ENCODE measurements at regions of chr2 and their contacts with region 1.

Region 1: GRCh38 chr2:7725171-7725849 is 808.1 kb downstream of the RNF144A start:
- DNase-seq: peak in 2 of 5 donors; percentile 20 to 22
- H3K4me3 ChIP-seq: no peak overlapping the region
- H3K27ac ChIP-seq: no peak overlapping the region
- H3K4me1 ChIP-seq: peaks cover 2% of the 10 kb centered on the region
- H3K27me3 ChIP-seq: no peaks in the 10 kb centered on the region
- CTCF ChIP-seq: peak in 2 of 3 donors; percentile 13 to 25
- EP300 ChIP-seq: no peak
- POLR2A ChIP-seq: no peak

Region 2: DNA sequence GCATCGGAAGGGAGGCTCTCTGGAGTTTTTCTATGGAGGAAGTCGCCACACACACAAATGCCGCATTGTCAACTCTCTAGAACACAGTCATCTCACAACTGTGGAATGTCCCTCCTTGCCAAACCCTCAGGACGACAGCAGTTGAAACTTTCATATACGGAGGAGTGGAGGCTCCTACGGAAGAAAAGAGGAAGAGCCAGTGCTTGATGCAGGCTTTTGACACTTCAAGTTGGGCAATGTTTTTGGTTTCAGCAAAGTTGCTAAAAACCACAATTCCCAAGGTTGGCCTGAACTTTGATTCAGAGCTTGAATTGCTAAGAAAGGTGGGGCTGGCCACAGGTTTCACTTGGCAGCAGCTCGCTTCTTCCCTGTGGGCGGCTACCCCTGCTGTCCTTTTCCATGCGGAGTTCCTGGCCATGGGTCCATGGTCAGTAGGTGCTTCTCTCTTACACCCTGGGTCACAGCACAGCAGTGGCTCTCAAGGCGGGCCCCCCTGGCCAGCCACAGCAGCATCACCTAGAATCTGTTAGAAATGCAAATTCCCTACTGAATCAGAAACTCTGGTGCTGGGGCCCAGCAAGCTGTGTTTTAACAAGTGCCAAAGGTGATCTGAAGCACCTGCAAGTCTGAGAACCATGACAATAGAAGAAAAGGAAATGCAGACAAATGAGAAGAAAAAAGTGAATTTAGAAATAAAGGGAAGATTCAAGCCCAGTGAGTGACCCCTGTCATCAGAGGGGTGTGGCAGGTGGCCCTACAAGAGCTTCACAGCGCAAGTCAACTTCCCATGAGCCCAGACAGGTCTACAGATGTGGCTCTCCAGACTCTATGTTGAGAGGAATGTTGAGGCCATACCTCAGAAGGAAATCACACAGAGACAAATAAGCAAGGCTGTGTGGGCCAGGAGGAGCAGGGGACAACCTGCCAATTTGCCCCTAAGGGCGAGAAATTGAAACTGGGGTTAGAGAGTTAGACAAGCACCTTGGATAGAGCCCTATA is 48.4 kb after region 1 on chr2:
- intact Hi-C with region 1: loop called in 1 of 4 experiments (anchors 2 kb)
- DNase-seq: no peak
- H3K4me3 ChIP-seq: no peak overlapping the region
- H3K27ac ChIP-seq: no peak overlapping the region
- H3K4me1 ChIP-seq: peaks cover 1% of the 10 kb centered on the region
- H3K27me3 ChIP-seq: no peaks in the 10 kb centered on the region
- CTCF ChIP-seq: no peak
- EP300 ChIP-seq: no peak
- POLR2A ChIP-seq: no peak

Measured in ovary (tissue), 10 donors.